Activated CD4-positive, alpha-beta memory T cell treated with anti-CD3 and anti-CD28 coated beads, Interleukin-2, amount 10 ng/mL, durations not matched to agents 7 days and 5 days (primary cell): ENCODE measurements at regions of chr7 and their contacts with region 1.

Region 1: DNA sequence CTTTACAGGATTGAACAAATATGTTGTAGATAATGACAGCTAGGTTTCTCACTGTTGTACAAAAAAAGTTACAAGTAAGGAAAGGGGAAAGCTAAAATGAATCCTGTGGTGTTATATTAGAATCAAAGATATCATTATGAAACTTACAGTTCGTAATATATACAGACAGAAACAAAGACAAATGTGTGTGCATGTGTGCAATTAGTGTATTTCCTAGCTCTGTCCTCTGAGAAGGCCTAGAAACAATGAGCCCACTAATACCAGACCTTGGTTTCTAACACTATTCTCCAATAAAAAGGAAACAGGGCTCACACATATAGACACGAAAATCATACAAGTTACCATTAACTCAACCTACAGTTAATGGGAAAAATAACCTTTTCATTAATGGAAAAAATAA is 8.0 kb downstream of the KDM7A start:
- DNase-seq: no peak
- H3K4me3 Mint-ChIP-seq: no peak overlapping the region
- H3K27ac Mint-ChIP-seq: no peak overlapping the region
- H3K4me1 Mint-ChIP-seq: peaks cover 72% of the 10 kb centered on the region
- H3K27me3 Mint-ChIP-seq: no peaks in the 10 kb centered on the region

Region 2: DNA sequence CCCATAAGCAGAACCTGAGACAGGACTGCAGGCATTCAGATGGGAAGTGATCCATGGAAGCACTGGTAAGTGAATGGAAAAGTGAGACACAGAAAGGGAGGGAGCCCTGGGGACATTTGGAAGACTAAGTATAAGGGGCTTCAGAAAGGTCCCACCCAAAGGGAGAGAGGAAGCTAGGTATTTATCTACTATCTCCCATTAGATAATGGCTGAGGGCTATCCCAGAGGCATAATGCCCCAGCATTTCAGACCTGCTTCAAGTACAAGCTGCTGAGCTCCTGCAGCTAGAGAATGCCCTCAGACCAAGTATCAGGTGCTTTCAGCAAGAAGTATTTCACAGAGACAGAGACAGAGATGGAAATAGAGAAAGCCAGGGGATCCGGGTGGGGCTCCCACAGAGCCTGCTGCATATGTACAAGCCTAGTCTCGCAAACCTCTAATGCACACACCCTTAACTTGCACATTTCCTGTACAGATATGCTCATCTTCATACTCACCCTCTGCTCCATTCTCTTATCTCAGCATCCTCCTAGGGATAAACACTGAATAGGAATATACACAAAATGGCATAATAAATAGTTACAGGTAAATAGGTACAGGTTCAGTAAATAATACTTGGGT is 12.2 kb before region 1 on chr7:
- CTCF ChIA-PET with region 1: interaction called, 4 read pairs
- POLR2A ChIA-PET with region 1: interaction called, 10 read pairs
- DNase-seq: no peak
- H3K4me3 Mint-ChIP-seq: no peak overlapping the region
- H3K27ac Mint-ChIP-seq: peak overlapping the region; percentile 11
- H3K4me1 Mint-ChIP-seq: peaks cover 58% of the 10 kb centered on the region
- H3K27me3 Mint-ChIP-seq: no peaks in the 10 kb centered on the region

Region 3: DNA sequence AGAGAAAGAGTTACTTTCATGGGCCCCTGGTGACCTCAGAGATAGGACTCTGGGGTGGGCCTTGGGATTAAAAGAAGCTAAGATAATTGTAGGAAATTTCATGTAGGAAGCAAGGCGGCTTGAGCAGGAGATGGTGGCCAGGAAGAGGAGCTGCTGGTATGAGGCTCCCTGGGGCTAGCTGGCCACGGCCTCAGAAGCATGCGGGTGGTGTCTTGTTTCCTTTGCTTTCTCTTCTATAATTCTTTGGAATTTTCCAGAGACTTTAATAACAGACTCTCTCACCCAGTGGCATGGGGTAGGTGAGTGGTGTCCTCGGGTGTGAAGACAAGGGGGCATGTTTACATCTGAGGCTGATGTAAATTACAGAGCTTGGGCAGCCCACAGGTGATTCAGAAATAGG is 49.8 kb after region 1 on chr7:
- CTCF ChIA-PET with region 1: no interaction called
- POLR2A ChIA-PET with region 1: no interaction called
- DNase-seq: no peak
- H3K4me3 Mint-ChIP-seq: no peak overlapping the region
- H3K27ac Mint-ChIP-seq: no peak overlapping the region
- H3K4me1 Mint-ChIP-seq: peaks cover 39% of the 10 kb centered on the region
- H3K27me3 Mint-ChIP-seq: no peaks in the 10 kb centered on the region